ENCODE measurements at regions of chr20 and their contacts with region 1.

Region 1: GRCh38 chr20:24160563-24161375 is 172.2 kb upstream of the GGTLC1 start:
- DNase-seq: no peak
- H3K4me3 Mint-ChIP-seq: no peak overlapping the region
- H3K27ac Mint-ChIP-seq: no peak overlapping the region
- H3K4me1 Mint-ChIP-seq: peaks cover 8% of the 10 kb centered on the region
- H3K27me3 Mint-ChIP-seq: no peaks in the 10 kb centered on the region

Region 2: GRCh38 chr20:23622839-23623343 is 537.9 kb before region 1 on chr20:
- intact Hi-C with region 1: no loop called
- DNase-seq: no peak
- H3K4me3 Mint-ChIP-seq: peak overlapping the region; percentile 28
- H3K27ac Mint-ChIP-seq: no peak overlapping the region
- H3K4me1 Mint-ChIP-seq: no peaks in the 10 kb centered on the region
- H3K27me3 Mint-ChIP-seq: no peaks in the 10 kb centered on the region

Region 3: GRCh38 chr20:23889775-23890211 is 271.0 kb before region 1 on chr20:
- intact Hi-C with region 1: loop called (anchors 5 kb)
- DNase-seq: peak; percentile 54
- H3K4me3 Mint-ChIP-seq: no peak overlapping the region
- H3K27ac Mint-ChIP-seq: no peak overlapping the region
- H3K4me1 Mint-ChIP-seq: no peaks in the 10 kb centered on the region
- H3K27me3 Mint-ChIP-seq: peaks cover under 1% of the 10 kb centered on the region

Region 4: DNA sequence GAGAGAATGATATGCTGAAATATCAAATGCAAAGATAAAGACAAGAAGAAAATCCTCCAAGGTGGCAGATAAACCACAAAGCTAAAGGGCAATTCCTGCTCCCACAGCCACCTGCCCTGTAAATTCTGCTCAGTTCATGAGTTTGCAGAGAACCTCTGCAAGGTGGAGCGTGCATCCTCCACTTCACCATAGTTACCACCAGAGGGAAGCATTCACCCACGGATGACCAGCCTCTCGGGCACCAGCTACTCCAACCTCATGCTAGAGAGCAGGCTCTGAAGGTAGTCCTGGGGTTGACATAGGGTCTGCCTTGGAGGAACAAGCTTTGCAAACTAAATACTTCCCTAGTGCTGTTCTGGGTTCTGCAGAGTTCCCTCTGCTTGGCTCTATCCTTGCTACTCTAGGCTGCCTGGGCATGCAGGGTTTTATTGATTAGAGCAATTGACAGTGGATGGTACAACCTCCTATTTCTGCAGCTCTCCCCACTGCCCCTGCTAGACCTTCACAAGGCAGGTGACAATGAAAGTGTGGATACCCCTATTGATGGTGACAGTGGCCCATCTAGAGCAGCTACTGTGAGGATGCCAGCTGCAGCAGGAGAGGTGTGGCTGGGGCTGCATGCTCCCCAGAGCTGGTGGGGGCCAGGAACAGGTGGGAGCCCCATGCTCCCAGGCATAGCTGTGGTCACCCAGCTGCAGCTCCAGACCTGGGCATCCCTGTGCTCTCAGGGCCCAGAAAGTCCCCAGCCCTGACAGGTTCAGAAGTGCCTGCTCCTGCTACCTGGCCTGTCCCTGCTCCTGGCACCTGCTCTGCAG is 223.3 kb before region 1 on chr20:
- intact Hi-C with region 1: loop called (anchors 1 kb)
- DNase-seq: peak; percentile 33
- H3K4me3 Mint-ChIP-seq: no peak overlapping the region
- H3K27ac Mint-ChIP-seq: no peak overlapping the region
- H3K4me1 Mint-ChIP-seq: no peaks in the 10 kb centered on the region
- H3K27me3 Mint-ChIP-seq: peaks cover 3% of the 10 kb centered on the region

Region 5: GRCh38 chr20:24027229-24027628 is 133.5 kb before region 1 on chr20:
- intact Hi-C with region 1: no loop called
- DNase-seq: peak; percentile 82
- H3K4me3 Mint-ChIP-seq: peak overlapping the region; percentile 50
- H3K27ac Mint-ChIP-seq: peak overlapping the region; percentile 86
- H3K4me1 Mint-ChIP-seq: peaks cover 56% of the 10 kb centered on the region
- H3K27me3 Mint-ChIP-seq: no peaks in the 10 kb centered on the region

Region 6: GRCh38 chr20:24060851-24061590 is 99.7 kb before region 1 on chr20:
- intact Hi-C with region 1: no loop called
- DNase-seq: no peak
- H3K4me3 Mint-ChIP-seq: no peak overlapping the region
- H3K27ac Mint-ChIP-seq: no peak overlapping the region
- H3K4me1 Mint-ChIP-seq: peaks cover 6% of the 10 kb centered on the region
- H3K27me3 Mint-ChIP-seq: no peaks in the 10 kb centered on the region

Measured in activated T-helper 1 cell treated with anti-CD3 and anti-CD28 coated beads, Interleukin-12 subunit alpha, Interleukin-12 subunit beta, Interleukin-2, Interleukin-4 antibody, amounts not matched to agents 30 ng/mL and 10 ng/mL and 1 ng/mL, durations not matched to agents 14 hours and 24 hours and 36 hours (primary cell).